ENCODE measurements at regions of chr6 and their contacts with region 1.

Region 1: DNA sequence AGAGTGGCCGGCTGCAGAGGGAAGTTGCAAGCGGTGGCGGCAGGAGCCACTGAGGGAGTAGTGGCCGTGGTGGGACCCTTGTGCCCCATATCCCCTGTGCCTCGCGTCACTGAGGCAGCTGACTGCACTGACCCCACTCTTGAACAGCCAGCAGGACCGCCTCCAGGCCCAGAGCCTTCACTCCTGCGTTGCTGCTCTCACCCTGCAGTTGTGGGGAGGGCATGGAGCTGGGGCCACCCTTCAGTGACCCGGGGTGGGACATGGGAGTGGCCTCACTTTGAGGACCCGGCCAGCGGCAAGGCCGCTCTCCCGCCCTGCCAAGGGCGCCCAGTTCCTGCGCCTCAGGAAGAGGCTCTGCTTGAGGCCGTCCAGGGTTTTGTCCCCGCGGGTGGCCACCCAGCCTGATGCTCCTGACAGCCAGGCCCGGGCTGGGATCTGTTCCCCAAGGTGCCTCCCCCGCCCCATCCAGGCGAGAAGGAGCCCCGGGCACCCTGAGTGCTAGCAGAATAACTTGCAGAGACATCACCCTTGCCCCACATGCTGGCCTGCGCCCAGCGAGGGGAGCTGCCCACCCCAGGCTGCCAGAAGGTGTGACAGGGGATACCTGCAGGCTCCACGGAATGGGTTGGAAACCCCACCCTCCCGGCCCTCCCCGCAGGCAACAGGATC is 44.4 kb downstream of the HLA-DRA start:
- DNase-seq: peak in 3 of 10 donors; percentile 59 to 82 (median 64)

Region 2: GRCh38 chr6:32570363-32570905 is 86.3 kb after region 1 on chr6:
- intact Hi-C with region 1: loop called (anchors 2 kb)
- DNase-seq: no peak

Region 3: DNA sequence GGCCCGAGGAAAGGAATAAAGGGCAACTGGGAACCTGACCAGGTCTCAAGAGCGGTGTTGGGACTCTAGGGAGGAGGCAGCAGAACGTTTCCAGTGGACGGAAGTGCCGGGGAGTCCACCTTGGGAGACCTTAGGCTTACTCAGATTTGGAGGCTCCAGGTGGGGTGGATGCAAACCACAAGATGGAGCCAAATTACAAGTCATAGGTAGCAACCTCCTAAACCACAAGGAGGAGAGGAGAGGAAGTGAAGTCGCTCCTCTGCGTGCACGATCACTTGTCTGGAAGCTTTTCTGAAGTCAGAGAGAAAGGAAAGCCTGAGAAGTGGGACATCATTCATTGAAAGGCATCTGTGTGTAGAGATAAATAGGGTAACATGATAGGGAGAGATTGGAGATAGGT is 516.0 kb after region 1 on chr6:
- intact Hi-C with region 1: no loop called
- DNase-seq: no peak

Measured in posterior cingulate gyrus (tissue), 11 donors.